ENCODE measurements at regions of chr19 and their contacts with region 1.

Region 1: GRCh38 chr19:18557474-18558201 is at the start of gene KXD1:
- DNase-seq: peak; percentile 95 to 99
- H3K4me3 ChIP-seq: peak within 1 kb of the TSS; percentile 79 to 95
- H3K27ac ChIP-seq: peak within 1 kb of the TSS; percentile 98
- H3K4me1 ChIP-seq: peaks cover 5 to 34% of the 10 kb centered on the region in 2 donors
- H3K27me3 ChIP-seq: no peaks in the 10 kb centered on the region
- CTCF ChIP-seq: no peak
- total RNA-seq, gene KXD1: 178 TPM

Region 2: GRCh38 chr19:18364826-18365528 is 192.7 kb before region 1 on chr19:
- intact Hi-C with region 1: no loop called
- DNase-seq: peak in 1 of 2 donors; percentile 90
- H3K4me3 ChIP-seq: peak overlapping the region in 1 of 2 donors; percentile 2
- H3K27ac ChIP-seq: peak overlapping the region; percentile 81 to 85
- H3K4me1 ChIP-seq: peaks cover 5 to 16% of the 10 kb centered on the region in 2 donors
- H3K27me3 ChIP-seq: no peaks in the 10 kb centered on the region
- CTCF ChIP-seq: no peak

Region 3: GRCh38 chr19:18464646-18465045 is 93.0 kb before region 1 on chr19:
- intact Hi-C with region 1: loop called (anchors 2 kb)
- DNase-seq: peak; percentile 71 to 93
- H3K4me3 ChIP-seq: no peak overlapping the region
- H3K27ac ChIP-seq: peak overlapping the region; percentile 89 to 94
- H3K4me1 ChIP-seq: peaks cover 23 to 67% of the 10 kb centered on the region in 2 donors
- H3K27me3 ChIP-seq: no peaks in the 10 kb centered on the region
- CTCF ChIP-seq: no peak

Region 4: DNA sequence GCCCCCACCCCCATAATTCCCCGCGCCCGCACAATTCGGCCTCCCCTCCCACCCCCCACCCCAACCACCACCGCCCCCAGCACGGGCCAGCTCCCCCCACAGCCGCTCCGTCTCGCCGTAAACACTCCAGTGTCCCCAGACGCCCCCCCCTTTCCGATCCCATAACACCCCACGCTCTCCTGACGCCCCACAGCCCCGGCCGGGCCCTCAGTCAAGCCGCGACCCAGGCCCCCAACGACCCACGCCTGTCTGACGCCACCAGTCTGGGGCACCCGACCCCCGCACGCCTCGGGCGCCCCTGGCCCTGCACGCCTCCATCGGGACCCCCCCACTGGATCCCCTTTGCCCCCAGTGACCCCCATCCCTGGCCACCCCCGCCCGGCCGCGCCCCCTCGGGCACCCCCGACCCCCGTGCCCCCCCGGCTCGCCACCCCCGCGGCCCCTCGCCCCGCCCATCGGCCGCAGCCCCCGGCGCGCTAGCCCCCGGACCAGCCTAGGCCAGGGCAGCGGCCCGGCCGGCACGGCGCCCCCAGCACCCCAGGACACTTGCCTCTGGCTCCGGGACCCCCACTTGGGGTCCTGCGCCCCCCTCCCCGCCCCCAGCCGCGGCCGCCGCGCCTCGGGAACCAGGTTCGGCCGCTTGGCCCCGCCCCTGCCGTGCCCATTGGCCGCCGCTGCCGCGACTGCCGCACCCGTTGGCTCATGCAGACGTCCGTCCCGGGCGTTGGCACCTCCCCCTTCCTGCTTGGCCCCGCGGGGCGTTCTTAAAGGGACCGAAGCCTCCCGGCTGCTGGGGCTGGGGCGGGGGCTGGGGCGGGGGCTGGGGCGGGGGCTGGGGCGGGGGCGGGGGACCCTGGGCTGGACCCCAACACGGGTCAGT is 14.5 kb before region 1 on chr19 and contains the start of gene FKBP8:
- intact Hi-C with region 1: loop called (anchors 2 kb)
- DNase-seq: peak; percentile 70 to 96
- H3K4me3 ChIP-seq: peak within 1 kb of the TSS; percentile 70 to 85
- H3K27ac ChIP-seq: peak within 1 kb of the TSS; percentile 87 to 88
- H3K4me1 ChIP-seq: peaks cover 4 to 10% of the 10 kb centered on the region in 2 donors
- H3K27me3 ChIP-seq: no peaks in the 10 kb centered on the region
- CTCF ChIP-seq: no peak
- total RNA-seq, gene FKBP8: 395 TPM